ENCODE measurements at regions of chr5 and their contacts with region 1.

Region 1: GRCh38 chr5:160439205-160439600 is 17.5 kb downstream of the PTTG1 start:
- DNase-seq: peak; percentile 95
- H3K4me3 Mint-ChIP-seq: peak overlapping the region; percentile 64
- H3K27ac Mint-ChIP-seq: no peak overlapping the region
- H3K4me1 Mint-ChIP-seq: peaks cover 29% of the 10 kb centered on the region
- H3K27me3 Mint-ChIP-seq: peaks cover 17% of the 10 kb centered on the region
- CTCF ChIP-seq: peak; percentile 92

Region 2: DNA sequence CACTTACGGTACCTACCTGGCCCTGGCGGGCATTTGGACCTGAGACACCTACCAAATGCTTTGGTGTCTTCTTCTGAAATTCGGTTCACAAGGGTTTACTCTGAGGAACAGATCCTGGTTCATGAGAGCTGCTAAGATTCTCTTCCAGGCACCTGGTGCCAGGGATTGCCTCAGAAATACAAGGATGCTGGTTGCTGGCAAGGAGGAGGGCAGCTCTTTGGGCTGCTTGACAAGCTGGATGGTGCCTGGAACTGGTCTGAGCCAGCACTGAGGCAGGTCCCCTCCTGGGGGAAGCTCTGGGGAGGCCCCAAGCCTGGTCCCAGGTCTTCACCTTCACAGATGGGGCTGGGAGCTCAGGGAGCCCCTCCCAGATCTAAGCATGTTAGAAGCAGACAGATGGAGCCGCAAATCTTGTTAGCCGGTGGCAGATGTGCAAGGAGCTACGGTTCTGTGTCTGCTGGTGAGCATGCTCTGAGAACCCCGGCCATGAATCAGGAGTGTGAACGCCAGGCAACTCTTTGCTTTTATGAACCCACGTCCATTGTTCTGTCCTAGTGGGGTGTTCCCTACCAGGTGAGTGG is 193.6 kb before region 1 on chr5:
- CTCF ChIA-PET with region 1: no interaction called
- intact Hi-C with region 1: no loop called
- DNase-seq: no peak
- H3K4me3 Mint-ChIP-seq: no peak overlapping the region
- H3K27ac Mint-ChIP-seq: no peak overlapping the region
- H3K4me1 Mint-ChIP-seq: no peaks in the 10 kb centered on the region
- H3K27me3 Mint-ChIP-seq: no peaks in the 10 kb centered on the region
- CTCF ChIP-seq: no peak

Region 3: GRCh38 chr5:160369990-160370712 is 69.1 kb before region 1 on chr5 and contains the start of gene C1QTNF2:
- CTCF ChIA-PET with region 1: no interaction called
- intact Hi-C with region 1: no loop called
- DNase-seq: peak; percentile 32
- H3K4me3 Mint-ChIP-seq: peak within 1 kb of the TSS; percentile 71
- H3K27ac Mint-ChIP-seq: no peak within 1 kb of the TSS
- H3K4me1 Mint-ChIP-seq: peaks cover 9% of the 10 kb centered on the region
- H3K27me3 Mint-ChIP-seq: peaks cover 79% of the 10 kb centered on the region
- CTCF ChIP-seq: no peak
- total RNA-seq, gene C1QTNF2: not detected in 2 replicates

Region 4: DNA sequence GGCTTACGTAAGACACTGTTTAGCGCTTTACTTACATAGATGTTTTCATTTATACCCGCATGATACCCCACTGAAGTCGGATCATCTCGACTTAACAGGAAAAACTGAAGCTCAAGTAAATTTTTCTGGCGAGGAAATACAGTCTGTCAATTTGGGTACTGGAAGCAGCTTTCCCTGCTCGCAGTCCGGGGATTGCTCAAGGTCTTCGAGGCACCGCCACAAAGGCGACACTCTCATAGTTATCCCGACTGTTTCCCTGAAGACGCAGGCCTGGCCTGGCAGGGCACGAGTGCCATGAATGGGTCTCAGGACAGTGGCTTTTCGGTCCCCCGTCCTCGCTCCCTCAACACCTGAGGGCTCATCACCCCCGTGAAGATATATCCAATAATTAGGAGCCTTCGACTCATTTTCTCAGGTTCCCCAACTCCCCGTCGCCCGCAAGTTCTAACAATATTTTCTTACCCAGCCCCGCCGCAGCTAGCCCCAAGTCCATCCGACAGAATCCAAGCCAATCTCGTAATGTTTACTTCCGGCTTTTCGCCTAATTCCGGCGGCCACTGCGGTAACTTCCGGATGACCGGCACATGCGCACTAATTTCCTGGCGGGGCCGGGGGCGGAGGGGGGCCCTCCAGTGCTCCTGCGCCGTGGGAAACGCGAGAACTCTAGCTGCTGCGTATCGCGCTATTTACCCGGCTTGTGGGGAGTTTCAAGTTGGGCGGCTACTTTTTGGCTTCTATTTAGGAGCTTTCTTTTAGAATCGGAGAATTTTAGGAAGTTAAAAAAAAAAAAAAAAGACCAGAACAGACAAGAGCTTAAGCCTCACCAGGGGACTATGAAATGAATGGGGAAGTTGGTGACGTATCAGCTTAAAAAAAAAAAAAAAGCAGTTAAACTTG is 20.4 kb before region 1 on chr5 and contains the start of gene SLU7:
- CTCF ChIA-PET with region 1: interaction called, 10 read pairs
- intact Hi-C with region 1: no loop called
- DNase-seq: peak; percentile 97
- H3K4me3 Mint-ChIP-seq: peak within 1 kb of the TSS; percentile 95
- H3K27ac Mint-ChIP-seq: peak within 1 kb of the TSS; percentile 97
- H3K4me1 Mint-ChIP-seq: peaks cover 70% of the 10 kb centered on the region
- H3K27me3 Mint-ChIP-seq: no peaks in the 10 kb centered on the region
- CTCF ChIP-seq: no peak
- total RNA-seq, gene SLU7: 62.8 and 71.2 TPM in 2 replicates

Region 5: GRCh38 chr5:160467555-160468362 is 28.6 kb after region 1 on chr5:
- CTCF ChIA-PET with region 1: interaction called, 51 read pairs
- intact Hi-C with region 1: loop called (anchors 2 kb)
- DNase-seq: peak; percentile 95
- H3K4me3 Mint-ChIP-seq: peak overlapping the region; percentile 89
- H3K27ac Mint-ChIP-seq: peak overlapping the region; percentile 95
- H3K4me1 Mint-ChIP-seq: peaks cover 86% of the 10 kb centered on the region
- H3K27me3 Mint-ChIP-seq: no peaks in the 10 kb centered on the region
- CTCF ChIP-seq: no peak

Region 6: GRCh38 chr5:160508780-160509361 is 69.7 kb after region 1 on chr5:
- CTCF ChIA-PET with region 1: interaction called, 15 read pairs
- intact Hi-C with region 1: loop called (anchors 1 kb)
- DNase-seq: peak; percentile 83
- H3K4me3 Mint-ChIP-seq: no peak overlapping the region
- H3K27ac Mint-ChIP-seq: no peak overlapping the region
- H3K4me1 Mint-ChIP-seq: peaks cover 18% of the 10 kb centered on the region
- H3K27me3 Mint-ChIP-seq: peaks cover 18% of the 10 kb centered on the region
- CTCF ChIP-seq: peak; percentile 83

Region 7: DNA sequence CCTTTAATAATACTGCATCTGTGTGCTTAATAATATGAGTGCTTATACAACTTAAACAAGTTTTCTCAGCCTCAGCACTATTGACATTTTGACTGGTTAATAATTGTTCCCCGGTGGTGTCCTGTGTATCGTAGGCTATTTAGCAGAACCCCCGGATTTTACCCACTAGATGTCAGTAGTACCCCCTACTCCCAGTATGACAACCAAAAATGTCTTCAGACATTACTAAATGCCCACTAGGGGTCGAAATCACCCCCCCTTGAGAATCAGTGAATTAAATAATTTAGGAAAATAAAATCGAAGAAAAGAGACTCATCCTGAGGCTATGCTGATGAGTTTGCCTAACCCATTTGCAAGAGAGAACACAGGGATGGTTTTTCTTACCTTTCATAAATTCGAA is 246.5 kb after region 1 on chr5:
- CTCF ChIA-PET with region 1: no interaction called
- intact Hi-C with region 1: loop called (anchors 1 kb)
- DNase-seq: peak; percentile 61
- H3K4me3 Mint-ChIP-seq: no peak overlapping the region
- H3K27ac Mint-ChIP-seq: no peak overlapping the region
- H3K4me1 Mint-ChIP-seq: peaks cover 12% of the 10 kb centered on the region
- H3K27me3 Mint-ChIP-seq: no peaks in the 10 kb centered on the region
- CTCF ChIP-seq: peak; percentile 78

Measured in Calu3 (cell line).